K562 (cell line): ENCODE measurements at regions of chr11 and their contacts with region 1.

Region 1: DNA sequence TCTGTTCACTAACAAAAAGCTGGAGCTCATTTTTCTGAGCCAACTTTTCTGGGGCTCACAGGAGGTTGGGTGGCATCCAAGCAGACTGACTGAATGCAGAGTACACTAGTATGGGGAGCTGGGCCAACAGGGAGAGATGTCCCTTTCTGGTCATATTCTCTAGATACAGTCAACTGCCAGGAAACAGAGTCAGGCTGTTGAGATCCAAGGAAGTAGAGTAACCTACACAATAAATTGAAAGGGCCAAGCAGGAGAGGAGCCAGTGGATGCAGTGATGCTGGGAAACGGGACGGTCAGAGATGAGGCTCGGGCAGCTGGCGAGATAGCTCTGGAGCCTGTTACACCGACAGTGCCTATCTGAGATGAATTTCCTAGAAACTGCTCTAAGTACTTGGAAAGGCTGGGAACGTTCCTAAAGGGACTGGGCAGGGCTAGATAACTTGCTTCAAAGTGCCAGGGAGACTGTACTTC is 71.1 kb downstream of the LARGE2 start:
- DNase-seq: peak; percentile 45 to 86 (median 52)
- ATAC-seq: peak; percentile 46
- H3K4me3 ChIP-seq: peak overlapping the region; percentile 7; the same call in 1 of the 2 replicates
- H3K27ac ChIP-seq: peak overlapping the region; percentile 98
- H3K4me1 ChIP-seq: peaks cover 24 to 72% of the 10 kb centered on the region in 2 experiments
- H3K27me3 ChIP-seq: no peaks in the 10 kb centered on the region
- CTCF ChIP-seq: no peak
- EP300 ChIP-seq: peak; percentile 77
- POLR2A ChIP-seq: no peak
- RAD21 ChIP-seq: no peak

Region 2: GRCh38 chr11:45964911-45965389 is 28.6 kb before region 1 on chr11:
- CTCF ChIA-PET with region 1: no interaction called
- POLR2A ChIA-PET with region 1: interaction called, 26 read pairs
- in situ Hi-C with region 1: no loop called
- intact Hi-C with region 1: loop called (anchors 2 kb)
- DNase-seq: peak; percentile 76 to 87 (median 80)
- ATAC-seq: peak; percentile 98
- H3K4me3 ChIP-seq: no peak overlapping the region
- H3K27ac ChIP-seq: no peak overlapping the region; the same call in 2 of the 3 replicates
- H3K4me1 ChIP-seq: peaks cover 3 to 6% of the 10 kb centered on the region in 2 experiments; a peak in 3 of 5 replicates
- H3K27me3 ChIP-seq: no peaks in the 10 kb centered on the region
- CTCF ChIP-seq: peak; percentile 91 to 95 (median 92)
- EP300 ChIP-seq: no peak
- POLR2A ChIP-seq: no peak
- RAD21 ChIP-seq: peak; percentile 90 to 97

Region 3: GRCh38 chr11:45982656-45983470 is 10.7 kb before region 1 on chr11:
- CTCF ChIA-PET with region 1: no interaction called
- POLR2A ChIA-PET with region 1: interaction called, 41 read pairs
- in situ Hi-C with region 1: no loop called
- intact Hi-C with region 1: loop called (anchors 1 kb)
- DNase-seq: peak; percentile 74 to 93 (median 83)
- ATAC-seq: peak; percentile 95
- H3K4me3 ChIP-seq: no peak overlapping the region
- H3K27ac ChIP-seq: peak overlapping the region; percentile 78
- H3K4me1 ChIP-seq: peaks cover 8 to 34% of the 10 kb centered on the region in 2 experiments
- H3K27me3 ChIP-seq: no peaks in the 10 kb centered on the region
- CTCF ChIP-seq: no peak
- EP300 ChIP-seq: peak; percentile 79; the same call in 1 of the 2 replicates
- POLR2A ChIP-seq: peak; percentile 64
- RAD21 ChIP-seq: no peak

Region 4: GRCh38 chr11:46100670-46101069 is 107.1 kb after region 1 on chr11:
- CTCF ChIA-PET with region 1: no interaction called
- POLR2A ChIA-PET with region 1: no interaction called
- in situ Hi-C with region 1: no loop called
- intact Hi-C with region 1: loop called (anchors 10 kb)
- DNase-seq: no peak
- ATAC-seq: peak; percentile 11; the same call in 2 of the 3 replicates
- H3K4me3 ChIP-seq: no peak overlapping the region
- H3K27ac ChIP-seq: no peak overlapping the region
- H3K4me1 ChIP-seq: peaks cover 9 to 37% of the 10 kb centered on the region in 2 experiments; a peak in 4 of 5 replicates
- H3K27me3 ChIP-seq: no peaks in the 10 kb centered on the region
- CTCF ChIP-seq: no peak
- EP300 ChIP-seq: no peak
- POLR2A ChIP-seq: no peak
- RAD21 ChIP-seq: no peak